Left colon (tissue), 2 donors: ENCODE measurements at regions of chr2 and their contacts with region 1.

Region 1: GRCh38 chr2:113756355-113757137 is at the start of gene SLC35F5:
- DNase-seq: peak; percentile 87 to 96
- ATAC-seq: peak; percentile 89
- total RNA-seq, gene SLC35F5: 130 to 132 TPM

Region 2: GRCh38 chr2:113889471-113890252 is 133.1 kb after region 1 on chr2 and contains the start of gene ACTR3:
- intact Hi-C with region 1: loop called in 1 of 2 experiments (anchors 2 kb)
- DNase-seq: peak; percentile 98 to 99
- ATAC-seq: peak; percentile 91
- total RNA-seq, gene ACTR3: 252 to 276 TPM

Region 3: DNA sequence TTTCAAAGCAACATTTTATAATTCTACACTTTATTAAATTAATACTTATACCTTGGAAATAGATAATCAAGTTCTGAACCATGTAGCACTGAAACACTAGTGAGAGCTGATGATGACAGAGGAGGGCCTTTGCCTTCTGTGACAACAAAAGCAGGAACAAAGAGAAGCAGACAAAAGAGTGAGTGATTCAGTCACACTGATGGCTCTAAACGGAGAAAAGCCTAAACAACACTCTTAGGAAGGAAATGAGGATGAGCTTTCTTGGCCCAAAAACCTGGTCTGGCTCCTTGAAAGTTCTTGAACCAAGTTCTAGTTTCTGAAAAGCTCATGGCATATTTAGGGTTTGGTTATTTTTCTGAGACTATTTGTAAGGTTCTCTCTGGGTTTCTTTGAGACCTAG is 957.8 kb after region 1 on chr2:
- intact Hi-C with region 1: no loop called
- DNase-seq: no peak
- ATAC-seq: no peak